Panc1 (cell line): ENCODE measurements at regions of chr3 and their contacts with region 1.

Region 1: GRCh38 chr3:110711851-110712516 is 359.6 kb upstream of the NECTIN3 start:
- DNase-seq: no peak
- ATAC-seq: no peak
- H3K4me3 ChIP-seq: no peak overlapping the region
- H3K27ac ChIP-seq: no peak overlapping the region
- H3K4me1 ChIP-seq: no peaks in the 10 kb centered on the region
- H3K27me3 ChIP-seq: no peaks in the 10 kb centered on the region
- CTCF ChIP-seq: no peak

Region 2: DNA sequence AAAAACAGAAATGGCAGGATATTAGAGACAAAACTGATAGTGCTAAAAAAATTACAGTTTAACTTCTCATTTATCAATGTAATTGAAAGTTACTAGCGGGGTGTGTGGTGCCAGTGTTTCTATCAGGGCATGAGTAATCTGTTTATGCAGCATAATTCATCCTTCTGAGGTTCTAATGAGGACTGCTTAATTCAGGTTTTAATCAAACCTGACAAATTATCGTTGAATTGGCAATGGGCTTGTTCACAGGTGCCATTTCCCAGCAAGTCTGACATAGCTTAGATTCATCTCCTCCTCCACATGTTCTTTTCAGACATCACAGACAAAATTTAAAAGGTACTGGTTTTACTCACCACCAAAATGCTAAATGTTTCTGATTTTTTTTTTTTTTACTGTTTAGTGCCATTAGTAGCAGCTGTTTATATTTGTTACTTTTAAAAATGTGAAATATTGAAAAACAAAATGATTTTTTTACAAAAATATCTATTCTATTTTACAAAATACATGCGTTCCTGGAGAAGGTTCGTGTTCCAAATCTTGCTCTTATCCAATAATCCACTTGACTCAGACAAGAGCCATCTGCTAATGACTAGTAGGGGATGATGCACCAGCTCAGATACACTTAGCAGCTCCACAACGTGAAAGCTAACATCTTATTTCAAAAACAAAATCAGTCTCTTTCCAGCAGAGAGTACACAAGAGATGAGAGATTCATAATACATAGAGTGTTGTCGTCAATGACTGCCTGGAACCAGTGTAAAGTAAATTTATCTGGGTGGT is 926.9 kb before region 1 on chr3:
- CTCF ChIA-PET with region 1: no interaction called
- POLR2A ChIA-PET with region 1: no interaction called
- in situ Hi-C with region 1: no loop called
- intact Hi-C with region 1: no loop called
- DNase-seq: no peak
- ATAC-seq: no peak
- H3K4me3 ChIP-seq: no peak overlapping the region
- H3K27ac ChIP-seq: no peak overlapping the region
- H3K4me1 ChIP-seq: no peaks in the 10 kb centered on the region
- H3K27me3 ChIP-seq: no peaks in the 10 kb centered on the region
- CTCF ChIP-seq: no peak

Region 3: DNA sequence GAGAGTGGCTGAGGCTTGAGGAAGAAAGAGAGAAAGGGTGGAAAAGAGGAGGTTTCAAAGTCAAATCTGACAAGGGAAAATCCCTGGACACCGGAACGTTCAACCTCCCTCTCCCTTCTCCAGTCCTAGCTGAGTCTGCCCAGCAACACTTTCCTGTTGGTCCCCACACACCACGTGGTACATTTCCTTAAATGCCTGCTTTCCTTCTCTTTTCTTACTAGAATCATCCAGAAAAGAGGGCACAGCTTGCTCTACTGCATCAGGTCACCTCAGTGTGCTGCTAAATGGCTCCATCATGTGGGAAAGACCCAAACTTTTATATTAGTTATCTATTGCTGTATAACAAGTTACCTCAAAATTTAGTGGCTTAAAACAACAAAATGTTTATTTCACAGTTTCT is 540.8 kb after region 1 on chr3:
- CTCF ChIA-PET with region 1: no interaction called
- POLR2A ChIA-PET with region 1: interaction called, 13 read pairs
- in situ Hi-C with region 1: no loop called
- intact Hi-C with region 1: no loop called
- DNase-seq: no peak
- ATAC-seq: no peak
- H3K4me3 ChIP-seq: no peak overlapping the region
- H3K27ac ChIP-seq: no peak overlapping the region
- H3K4me1 ChIP-seq: no peaks in the 10 kb centered on the region
- H3K27me3 ChIP-seq: no peaks in the 10 kb centered on the region
- CTCF ChIP-seq: no peak